ENCODE measurements at regions of chr20 and their contacts with region 1.

Region 1: DNA sequence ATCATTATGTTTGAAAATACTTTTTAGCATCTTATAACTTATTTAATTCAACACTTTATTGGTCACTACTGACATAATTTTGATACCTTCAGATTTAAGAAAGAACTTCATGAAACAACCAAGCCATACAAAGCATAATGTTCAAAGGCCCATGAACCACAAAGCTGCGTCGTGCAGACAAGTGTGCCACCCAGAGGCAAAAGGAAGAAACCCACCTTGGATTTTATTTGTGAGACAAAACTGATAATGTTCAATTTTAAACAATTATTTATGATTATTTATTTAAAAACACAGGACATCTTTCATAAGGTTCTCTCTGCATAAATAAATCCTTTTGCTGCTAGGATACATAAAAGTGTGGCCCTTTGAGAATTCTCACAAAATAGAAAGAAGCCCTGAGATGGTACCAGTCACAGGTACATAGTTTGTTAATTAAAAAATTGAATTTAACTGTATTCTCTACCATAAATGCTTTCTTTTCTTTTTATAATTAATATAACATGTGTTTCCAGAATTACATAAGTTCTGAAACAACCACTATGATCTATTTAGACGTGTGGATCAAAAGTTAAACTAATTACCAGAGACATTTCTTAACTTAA is 143.7 kb downstream of the RALGAPA2 start:
- DNase-seq: peak; percentile 48
- H3K4me3 ChIP-seq: no peak overlapping the region
- H3K27ac ChIP-seq: no peak overlapping the region
- H3K4me1 ChIP-seq: no peaks in the 10 kb centered on the region
- H3K27me3 ChIP-seq: no peaks in the 10 kb centered on the region
- CTCF ChIP-seq: peak; percentile 47 to 75 (median 75)
- POLR2A ChIP-seq: no peak

Region 2: GRCh38 chr20:20083807-20084206 is 484.9 kb before region 1 on chr20:
- intact Hi-C with region 1: loop called (anchors 10 kb)
- DNase-seq: no peak
- H3K4me3 ChIP-seq: no peak overlapping the region
- H3K27ac ChIP-seq: no peak overlapping the region
- H3K4me1 ChIP-seq: peaks cover 5% of the 10 kb centered on the region
- H3K27me3 ChIP-seq: no peaks in the 10 kb centered on the region
- CTCF ChIP-seq: peak in 2 of 3 experiments; percentile 40 to 45
- POLR2A ChIP-seq: no peak

Region 3: DNA sequence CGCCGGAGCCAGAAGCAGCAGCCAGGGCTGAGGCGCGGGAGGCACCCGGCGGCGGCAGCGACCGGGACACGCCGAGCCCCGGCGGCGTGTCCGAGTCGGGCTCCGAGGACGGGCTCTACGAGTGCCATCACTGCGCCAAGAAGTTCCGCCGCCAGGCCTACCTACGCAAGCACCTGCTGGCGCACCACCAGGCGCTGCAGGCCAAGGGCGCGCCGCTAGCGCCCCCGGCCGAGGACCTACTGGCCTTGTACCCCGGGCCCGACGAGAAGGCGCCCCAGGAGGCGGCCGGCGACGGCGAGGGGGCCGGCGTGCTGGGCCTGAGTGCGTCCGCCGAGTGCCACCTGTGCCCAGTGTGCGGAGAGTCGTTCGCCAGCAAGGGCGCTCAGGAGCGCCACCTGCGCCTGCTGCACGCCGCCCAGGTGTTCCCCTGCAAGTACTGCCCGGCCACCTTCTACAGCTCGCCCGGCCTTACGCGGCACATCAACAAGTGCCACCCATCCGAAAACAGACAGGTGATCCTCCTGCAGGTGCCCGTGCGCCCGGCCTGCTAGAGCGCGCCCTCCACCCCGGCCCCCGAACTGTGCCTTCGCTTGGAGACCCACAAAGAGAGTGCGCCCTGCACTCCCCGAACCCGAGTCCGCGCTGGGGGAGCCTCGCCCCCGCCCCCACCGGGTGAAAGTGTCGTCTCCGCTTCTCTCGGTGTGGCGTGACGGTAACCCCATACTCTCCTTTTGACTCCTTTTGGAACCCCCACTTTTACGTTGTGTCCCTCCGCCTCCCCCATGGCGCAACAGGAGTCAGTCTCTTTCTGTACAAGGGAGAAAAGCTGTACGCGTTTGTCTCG is 199.2 kb before region 1 on chr20:
- intact Hi-C with region 1: loop called (anchors 10 kb)
- DNase-seq: no peak
- H3K4me3 ChIP-seq: peak overlapping the region; percentile 36 to 41
- H3K27ac ChIP-seq: no peak overlapping the region
- H3K4me1 ChIP-seq: no peaks in the 10 kb centered on the region
- H3K27me3 ChIP-seq: peaks cover 3% of the 10 kb centered on the region
- CTCF ChIP-seq: no peak
- POLR2A ChIP-seq: no peak

Region 4: GRCh38 chr20:20849161-20849560 is 280.5 kb after region 1 on chr20:
- intact Hi-C with region 1: no loop called
- DNase-seq: no peak
- H3K4me3 ChIP-seq: no peak overlapping the region
- H3K27ac ChIP-seq: no peak overlapping the region
- H3K4me1 ChIP-seq: no peaks in the 10 kb centered on the region
- H3K27me3 ChIP-seq: no peaks in the 10 kb centered on the region
- CTCF ChIP-seq: no peak
- POLR2A ChIP-seq: no peak

Measured in testis (tissue), 5 donors.